HCT116 (cell line): ENCODE measurements at regions of chr12 and their contacts with region 1.

Region 1: DNA sequence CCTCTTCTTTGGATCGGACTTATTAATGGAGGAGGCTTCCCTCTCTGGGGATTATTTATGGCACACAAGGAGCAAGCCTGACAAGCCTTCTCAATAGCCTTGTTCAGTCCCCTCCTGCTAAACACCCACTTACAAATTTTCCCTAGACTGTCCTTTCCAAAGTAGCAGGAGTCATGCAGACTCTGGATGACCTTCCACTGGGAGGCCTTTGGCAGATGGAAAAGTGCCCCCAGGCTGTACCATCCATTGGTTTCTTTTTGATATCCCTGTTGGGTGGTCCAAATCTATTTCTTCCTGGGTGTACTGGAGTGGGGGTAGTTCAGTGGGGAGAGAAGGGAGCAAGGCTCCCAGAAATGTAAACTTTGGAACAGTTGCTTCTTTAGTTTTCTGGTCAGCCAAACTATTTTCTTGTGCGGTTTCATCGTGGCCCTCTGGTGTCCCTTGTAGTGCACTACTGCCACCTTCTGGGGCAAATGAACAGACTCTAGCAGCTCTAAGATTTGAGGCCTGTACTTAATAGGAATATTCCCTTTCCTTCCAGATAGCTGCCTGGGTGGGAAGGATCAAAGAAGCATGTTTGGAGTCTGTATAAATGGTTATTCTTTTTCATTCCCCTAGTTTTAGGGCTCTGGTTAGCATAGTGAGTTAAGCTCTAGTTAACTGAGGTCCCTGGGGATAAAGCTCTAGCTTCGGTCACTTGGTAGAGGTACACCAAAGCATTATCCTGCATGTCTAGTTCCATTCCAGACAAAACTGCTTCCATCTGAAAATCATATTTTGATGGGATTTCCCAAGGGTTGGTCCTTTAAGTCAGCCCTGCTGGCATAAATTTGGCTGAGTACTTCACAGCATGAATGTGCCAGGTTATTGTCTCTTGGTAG is 409.5 kb downstream of the SLC6A15 start:
- DNase-seq: peak; percentile 42
- ATAC-seq: peak; percentile 90
- H3K4me3 ChIP-seq: no peak overlapping the region
- H3K27ac ChIP-seq: no peak overlapping the region
- H3K4me1 ChIP-seq: peaks cover 0 to 16% of the 10 kb centered on the region in 2 experiments; a peak in 2 of 4 replicates
- H3K27me3 ChIP-seq: no peaks in the 10 kb centered on the region
- CTCF ChIP-seq: peak; percentile 41 to 77 (median 65); a peak in 5 of 6 replicates
- POLR2A ChIP-seq: no peak
- RAD21 ChIP-seq: peak; percentile 78

Region 2: DNA sequence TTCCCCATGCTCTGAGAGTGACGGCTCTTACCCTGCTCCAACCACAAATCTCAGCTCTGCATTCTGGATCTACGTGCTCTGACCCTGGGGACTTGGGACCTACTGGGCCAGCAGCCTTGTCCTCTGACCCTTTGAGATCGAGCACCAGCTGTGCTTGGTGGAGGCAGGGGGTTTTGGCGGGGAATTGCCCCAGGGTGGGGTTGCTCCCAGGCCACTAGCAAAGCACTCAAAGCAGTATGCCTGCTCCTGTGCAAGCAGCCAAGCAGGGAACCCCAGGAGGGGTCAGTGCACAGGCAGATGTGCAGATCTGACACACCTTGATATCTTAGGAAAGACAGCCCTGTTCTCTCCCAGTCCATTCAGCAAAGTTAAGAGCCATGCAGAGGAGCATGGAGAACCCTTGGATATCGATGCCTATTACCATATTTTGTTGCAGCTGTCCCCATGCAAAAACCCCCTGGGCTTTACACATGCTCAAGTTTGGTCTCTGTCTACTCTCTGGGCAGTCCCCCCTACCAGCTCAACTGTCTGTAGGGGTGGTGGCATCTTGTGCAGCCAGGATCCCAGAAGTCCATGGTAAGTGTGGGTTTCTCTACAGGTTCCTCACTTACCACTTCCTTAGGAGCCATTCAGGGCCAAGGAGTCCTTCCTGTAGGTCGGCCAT is 1497.5 kb before region 1 on chr12:
- CTCF ChIA-PET with region 1: no interaction called
- POLR2A ChIA-PET with region 1: no interaction called
- RAD21 ChIA-PET with region 1: no interaction called
- intact Hi-C with region 1: loop called (anchors 2 kb)
- DNase-seq: no peak
- ATAC-seq: no peak
- H3K4me3 ChIP-seq: no peak overlapping the region
- H3K27ac ChIP-seq: no peak overlapping the region
- H3K4me1 ChIP-seq: no peaks in the 10 kb centered on the region
- H3K27me3 ChIP-seq: no peaks in the 10 kb centered on the region
- CTCF ChIP-seq: no peak
- POLR2A ChIP-seq: no peak
- RAD21 ChIP-seq: no peak

Region 3: DNA sequence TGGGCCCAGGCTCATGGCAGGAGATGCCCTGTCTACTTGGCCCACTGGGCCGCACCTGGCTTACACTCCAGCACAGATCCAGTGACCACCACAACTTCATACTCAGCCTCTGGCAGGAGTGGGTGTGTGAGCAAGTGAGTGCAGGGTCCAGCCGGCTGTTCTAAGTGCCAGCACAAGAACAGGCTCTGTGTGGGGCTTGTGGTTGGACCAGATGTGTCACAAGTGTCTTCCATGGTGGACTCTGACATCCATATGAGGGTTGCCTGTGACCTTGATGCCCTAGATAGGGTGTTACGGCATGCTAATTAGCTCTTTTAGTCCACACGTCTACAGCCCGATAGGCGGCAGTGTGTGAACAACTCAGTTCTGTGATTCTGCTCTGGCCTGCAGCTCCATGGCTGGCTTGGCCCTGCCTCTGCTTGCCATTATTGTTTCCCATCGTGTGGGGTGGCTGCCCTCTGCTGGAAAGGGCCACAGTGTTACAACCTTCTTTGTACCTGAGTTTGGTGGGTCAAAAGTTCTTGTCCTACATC is 679.6 kb before region 1 on chr12:
- CTCF ChIA-PET with region 1: interaction called, 5 read pairs
- POLR2A ChIA-PET with region 1: no interaction called
- RAD21 ChIA-PET with region 1: interaction called in 1 of 2 experiments, 4 read pairs
- intact Hi-C with region 1: loop called (anchors 1 kb)
- DNase-seq: peak; percentile 44
- ATAC-seq: peak; percentile 75
- H3K4me3 ChIP-seq: no peak overlapping the region
- H3K27ac ChIP-seq: no peak overlapping the region
- H3K4me1 ChIP-seq: peaks cover 0 to 4% of the 10 kb centered on the region in 2 experiments; a peak in 1 of 4 replicates
- H3K27me3 ChIP-seq: no peaks in the 10 kb centered on the region
- CTCF ChIP-seq: peak; percentile 60 to 69 (median 62)
- POLR2A ChIP-seq: no peak
- RAD21 ChIP-seq: peak; percentile 83

Region 4: GRCh38 chr12:84842406-84843013 is 339.4 kb after region 1 on chr12:
- CTCF ChIA-PET with region 1: interaction called, 11 read pairs
- POLR2A ChIA-PET with region 1: no interaction called
- RAD21 ChIA-PET with region 1: no interaction called
- intact Hi-C with region 1: loop called (anchors 10 kb)
- DNase-seq: peak; percentile 28
- ATAC-seq: no peak
- H3K4me3 ChIP-seq: no peak overlapping the region
- H3K27ac ChIP-seq: no peak overlapping the region
- H3K4me1 ChIP-seq: no peaks in the 10 kb centered on the region
- H3K27me3 ChIP-seq: no peaks in the 10 kb centered on the region
- CTCF ChIP-seq: peak; percentile 46 to 78 (median 71); a peak in 5 of 6 replicates
- POLR2A ChIP-seq: no peak
- RAD21 ChIP-seq: peak; percentile 75